Activated T-helper 1 cell treated with anti-CD3 and anti-CD28 coated beads, Interleukin-12 subunit alpha, Interleukin-12 subunit beta, Interleukin-2, Interleukin-4 antibody, amounts not matched to agents 30 ng/mL and 10 ng/mL and 1 ng/mL, durations not matched to agents 14 hours and 24 hours and 36 hours (primary cell): ENCODE measurements at regions of chr10 and their contacts with region 1.

Region 1: DNA sequence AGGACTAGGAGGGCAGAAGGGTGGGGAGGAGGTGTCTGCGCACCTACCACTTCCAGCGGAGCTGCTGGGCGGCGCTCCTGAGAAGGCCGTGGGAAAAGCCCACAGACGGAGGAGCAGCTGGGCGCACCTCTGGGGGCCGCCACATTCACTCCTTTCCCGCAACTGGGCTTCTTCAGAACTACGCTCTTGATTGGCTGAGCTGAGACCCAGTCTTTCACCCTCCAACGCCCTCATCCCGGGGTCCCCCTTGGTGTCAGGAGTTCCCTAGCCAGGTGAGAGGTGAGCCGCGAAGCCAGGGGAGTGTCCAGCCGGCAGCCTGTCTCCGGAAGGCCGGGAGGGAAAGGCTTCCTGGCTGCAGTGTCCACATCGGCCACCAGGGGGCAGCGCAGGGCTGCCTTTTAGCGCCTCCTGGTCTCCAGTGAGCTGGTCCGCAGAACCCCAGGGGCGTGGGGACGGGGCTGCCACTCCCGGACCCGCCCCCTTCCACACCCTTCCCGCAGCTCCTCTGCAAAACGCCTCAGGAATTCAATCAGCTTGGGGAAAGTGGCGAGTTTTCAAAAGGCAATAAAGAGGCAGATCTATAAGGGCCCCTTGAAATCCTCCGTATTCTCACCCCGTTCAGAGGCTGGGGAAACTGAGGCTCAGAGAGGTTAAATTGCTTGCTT is 98.8 kb downstream of the CHST15 start:
- DNase-seq: peak; percentile 72
- H3K4me3 Mint-ChIP-seq: peak overlapping the region; percentile 53
- H3K27ac Mint-ChIP-seq: no peak overlapping the region
- H3K4me1 Mint-ChIP-seq: peaks cover 12% of the 10 kb centered on the region
- H3K27me3 Mint-ChIP-seq: peaks cover 51% of the 10 kb centered on the region

Region 2: GRCh38 chr10:124092860-124093773 is 98.6 kb after region 1 on chr10 and contains the start of gene CHST15:
- intact Hi-C with region 1: loop called (anchors 5 kb)
- DNase-seq: no peak
- H3K4me3 Mint-ChIP-seq: peak within 1 kb of the TSS; percentile 65
- H3K27ac Mint-ChIP-seq: no peak within 1 kb of the TSS
- H3K4me1 Mint-ChIP-seq: no peaks in the 10 kb centered on the region
- H3K27me3 Mint-ChIP-seq: peaks cover 61% of the 10 kb centered on the region
- total RNA-seq, gene CHST15: 0.15 and 0.18 TPM in 2 replicates

Region 3: DNA sequence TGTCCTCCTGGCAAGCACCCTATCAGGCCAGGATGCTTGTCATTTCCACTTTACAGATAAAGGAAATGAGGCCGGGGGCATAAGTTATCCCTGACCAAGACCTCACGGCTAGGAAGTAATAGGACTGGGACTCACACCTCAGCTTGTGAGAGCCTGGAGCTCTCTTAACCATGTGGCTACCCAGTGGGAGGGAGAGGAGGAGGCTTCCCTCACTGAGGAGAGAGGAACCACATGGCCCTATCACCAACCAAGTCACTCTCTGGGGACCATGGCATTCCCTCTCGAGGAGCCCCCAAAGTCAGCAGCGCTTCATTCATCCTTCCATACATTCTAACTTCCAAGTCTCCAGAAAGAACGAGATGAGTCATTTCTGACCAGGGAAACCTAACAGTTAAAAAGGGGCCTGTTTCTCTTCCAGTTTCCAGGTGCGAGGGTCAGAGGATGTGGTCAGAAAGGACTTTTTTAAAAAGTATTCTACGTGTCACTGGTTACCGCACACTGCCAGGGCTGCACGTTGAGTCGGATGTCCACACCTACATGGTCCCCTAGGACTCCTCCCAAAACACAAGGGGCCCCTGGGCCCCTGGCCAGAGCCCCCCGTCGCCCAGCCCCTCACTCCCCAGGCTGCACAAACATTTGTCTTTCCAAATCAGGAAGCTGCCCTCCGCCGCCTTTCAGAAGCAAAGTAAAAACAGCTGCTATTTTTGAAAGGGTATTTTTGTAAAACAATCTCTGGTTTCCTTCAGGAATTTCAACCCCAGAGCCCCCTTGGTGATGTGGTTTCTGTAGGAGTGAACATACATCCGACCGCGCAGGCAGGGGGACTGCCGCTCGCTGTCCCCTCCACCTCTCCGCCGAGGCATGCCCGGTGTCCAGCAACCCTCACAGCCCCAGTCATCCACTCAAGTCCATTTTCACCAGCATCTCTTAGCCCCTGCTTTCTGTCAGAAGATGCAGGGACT is 227.1 kb after region 1 on chr10:
- intact Hi-C with region 1: loop called (anchors 2 kb)
- DNase-seq: no peak
- H3K4me3 Mint-ChIP-seq: no peak overlapping the region
- H3K27ac Mint-ChIP-seq: peak overlapping the region; percentile 58
- H3K4me1 Mint-ChIP-seq: peaks cover 25% of the 10 kb centered on the region
- H3K27me3 Mint-ChIP-seq: peaks cover 13% of the 10 kb centered on the region

Region 4: DNA sequence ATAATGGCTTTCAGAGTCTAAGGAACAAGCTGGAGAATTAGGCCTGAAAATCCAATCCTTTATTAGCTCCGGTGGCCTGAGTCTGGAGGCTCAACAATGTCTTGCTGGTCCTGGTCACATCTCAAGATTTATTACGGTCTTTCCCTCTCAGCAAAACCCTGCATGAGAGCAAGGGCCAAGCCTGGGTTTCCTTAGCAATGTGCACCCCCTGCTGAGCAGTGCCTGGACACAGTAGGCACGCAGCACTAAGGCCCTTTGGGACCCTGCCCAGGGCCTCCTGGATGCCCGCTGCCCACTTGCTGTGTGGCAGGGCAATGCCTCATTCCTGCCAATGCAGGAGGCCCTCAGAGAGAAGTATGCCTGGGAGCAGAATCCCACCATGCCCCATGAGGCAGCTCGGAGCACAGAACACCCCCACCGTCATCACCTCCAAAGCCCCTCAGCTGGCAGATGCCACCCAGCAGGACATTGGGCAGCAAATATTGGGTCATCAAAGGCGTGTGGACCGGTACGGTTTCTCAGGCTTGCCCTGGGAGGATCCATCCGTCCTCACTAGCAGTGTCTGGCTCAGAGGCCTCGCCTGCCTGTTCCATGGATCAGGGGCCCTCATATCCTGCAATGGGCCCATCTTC is 267.8 kb after region 1 on chr10:
- intact Hi-C with region 1: loop called (anchors 5 kb)
- DNase-seq: no peak
- H3K4me3 Mint-ChIP-seq: no peak overlapping the region
- H3K27ac Mint-ChIP-seq: no peak overlapping the region
- H3K4me1 Mint-ChIP-seq: no peaks in the 10 kb centered on the region
- H3K27me3 Mint-ChIP-seq: no peaks in the 10 kb centered on the region

Region 5: GRCh38 chr10:124450012-124450781 is 455.6 kb after region 1 on chr10 and contains the start of gene NKX1-2:
- intact Hi-C with region 1: no loop called
- DNase-seq: no peak
- H3K4me3 Mint-ChIP-seq: no peak within 1 kb of the TSS
- H3K27ac Mint-ChIP-seq: peak within 1 kb of the TSS; percentile 55
- H3K4me1 Mint-ChIP-seq: peaks cover 6% of the 10 kb centered on the region
- H3K27me3 Mint-ChIP-seq: peaks cover 87% of the 10 kb centered on the region
- total RNA-seq, gene NKX1-2: not detected in 2 replicates